Natural killer cell (primary cell): ENCODE measurements at regions of chr3 and their contacts with region 1.

Region 1: GRCh38 chr3:82133070-82133606 is 371.7 kb upstream of the GBE1 start:
- DNase-seq: peak in 1 of 2 donors; percentile 63
- ATAC-seq: peak; percentile 40 to 68 (median 65)
- H3K4me3 ChIP-seq: no peak overlapping the region
- H3K4me3 Mint-ChIP-seq: no peak overlapping the region
- H3K27ac ChIP-seq: no peak overlapping the region
- H3K27ac Mint-ChIP-seq: no peak overlapping the region
- H3K4me1 ChIP-seq: no peaks in the 10 kb centered on the region
- H3K4me1 Mint-ChIP-seq: no peaks in the 10 kb centered on the region
- H3K27me3 ChIP-seq: no peaks in the 10 kb centered on the region
- H3K27me3 Mint-ChIP-seq: no peaks in the 10 kb centered on the region
- CTCF ChIP-seq: peak; percentile 61

Region 2: DNA sequence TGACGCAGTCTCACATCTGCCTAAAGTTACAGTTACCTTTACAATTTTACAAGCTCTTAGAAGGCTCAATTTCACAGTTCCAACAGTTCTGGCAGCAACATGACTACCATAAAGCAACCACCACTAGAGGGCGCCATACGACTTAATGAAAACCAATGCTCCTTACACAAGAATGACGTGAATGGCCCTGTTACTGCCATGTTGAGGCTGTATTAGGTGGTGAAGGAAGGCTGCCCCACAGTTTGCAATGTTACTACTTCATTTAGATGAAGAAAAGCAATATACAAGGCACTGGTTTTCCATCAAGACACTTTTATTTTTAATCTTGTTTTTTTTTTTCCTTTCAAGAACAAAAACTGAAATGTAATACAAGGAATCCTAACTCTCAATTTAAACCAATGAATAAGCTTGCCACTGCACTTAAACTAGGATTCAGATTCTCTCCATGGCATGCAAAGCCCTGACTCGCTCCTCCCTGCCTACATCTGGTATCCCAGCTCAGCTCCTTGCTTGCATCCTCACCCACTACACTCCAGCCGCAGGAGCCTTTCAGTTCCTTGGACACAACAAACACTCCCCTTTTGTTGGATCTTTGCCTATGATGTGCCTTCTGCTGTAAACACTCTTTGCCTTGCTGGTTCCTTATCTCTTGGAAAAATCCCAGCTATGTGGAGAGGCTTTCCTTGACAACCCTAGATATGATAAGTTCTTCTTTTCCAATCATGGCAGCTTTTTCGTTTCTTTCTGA is 642.4 kb before region 1 on chr3:
- intact Hi-C with region 1: loop called (anchors 1 kb)
- DNase-seq: peak; percentile 50 to 82
- ATAC-seq: peak; percentile 68 to 82 (median 77)
- H3K4me3 ChIP-seq: no peak overlapping the region
- H3K4me3 Mint-ChIP-seq: no peak overlapping the region
- H3K27ac ChIP-seq: no peak overlapping the region
- H3K27ac Mint-ChIP-seq: no peak overlapping the region
- H3K4me1 ChIP-seq: no peaks in the 10 kb centered on the region
- H3K4me1 Mint-ChIP-seq: peaks cover 5 to 8% of the 10 kb centered on the region in 2 donors
- H3K27me3 ChIP-seq: no peaks in the 10 kb centered on the region
- H3K27me3 Mint-ChIP-seq: no peaks in the 10 kb centered on the region
- CTCF ChIP-seq: peak; percentile 74

Region 3: GRCh38 chr3:81666493-81667121 is 466.5 kb before region 1 on chr3:
- intact Hi-C with region 1: loop called (anchors 1 kb)
- DNase-seq: peak in 1 of 2 donors; percentile 29
- ATAC-seq: no peak
- H3K4me3 ChIP-seq: no peak overlapping the region
- H3K4me3 Mint-ChIP-seq: no peak overlapping the region
- H3K27ac ChIP-seq: no peak overlapping the region
- H3K27ac Mint-ChIP-seq: no peak overlapping the region
- H3K4me1 ChIP-seq: no peaks in the 10 kb centered on the region
- H3K4me1 Mint-ChIP-seq: peaks cover 0 to 13% of the 10 kb centered on the region in 2 donors
- H3K27me3 ChIP-seq: no peaks in the 10 kb centered on the region
- H3K27me3 Mint-ChIP-seq: no peaks in the 10 kb centered on the region
- CTCF ChIP-seq: peak; percentile 62